H1 (cell line): ENCODE measurements at regions of chr11 and their contacts with region 1.

Region 1: GRCh38 chr11:134819041-134819440 is 407.0 kb upstream of the B3GAT1 start:
- DNase-seq: no peak
- H3K4me3 ChIP-seq: no peak overlapping the region
- H3K27ac ChIP-seq: no peak overlapping the region
- H3K4me1 ChIP-seq: peaks cover 0 to 3% (median under 1%) of the 10 kb centered on the region in 4 experiments; a peak in 1 of 7 replicates
- H3K27me3 ChIP-seq: 0 out of 7 replicates have a peak, but pooled peaks cover 0 to 3% (median 0%) of the 10 kb centered on the region in 4 experiments
- CTCF ChIP-seq: peak; percentile 66 to 83 (median 69)
- EP300 ChIP-seq: no peak
- POLR2A ChIP-seq: no peak
- RAD21 ChIP-seq: peak; percentile 60 to 73

Region 2: DNA sequence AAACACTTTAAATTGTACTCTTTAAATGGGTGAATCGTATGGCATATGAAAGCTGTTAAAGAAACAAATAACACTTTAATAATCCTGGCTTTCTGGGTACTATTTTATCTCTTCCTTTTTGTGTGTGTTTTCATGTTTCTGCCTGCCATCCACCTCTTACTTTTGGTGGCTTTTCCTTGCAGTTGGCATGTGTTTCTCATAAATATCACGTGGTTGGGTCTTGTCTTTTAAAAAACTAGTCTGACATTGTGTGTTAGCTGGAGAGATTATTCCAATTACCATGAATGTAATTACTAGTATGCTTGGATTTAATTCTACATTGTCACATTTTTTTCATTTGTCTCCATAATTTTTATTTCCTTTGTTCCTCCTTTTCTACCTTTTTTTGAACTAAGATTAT is 144.1 kb before region 1 on chr11:
- CTCF ChIA-PET with region 1: no interaction called
- POLR2A ChIA-PET with region 1: no interaction called
- DNase-seq: no peak
- H3K4me3 ChIP-seq: no peak overlapping the region
- H3K27ac ChIP-seq: no peak overlapping the region
- H3K4me1 ChIP-seq: peaks cover 0 to 3% (median 0%) of the 10 kb centered on the region in 4 experiments; a peak in 1 of 7 replicates
- H3K27me3 ChIP-seq: no peaks in the 10 kb centered on the region; a peak in 3 of 7 replicates
- CTCF ChIP-seq: no peak
- EP300 ChIP-seq: no peak
- POLR2A ChIP-seq: no peak
- RAD21 ChIP-seq: no peak

Region 3: GRCh38 chr11:134797411-134798089 is 21.5 kb before region 1 on chr11:
- CTCF ChIA-PET with region 1: interaction called, 10 read pairs
- POLR2A ChIA-PET with region 1: no interaction called
- DNase-seq: no peak
- H3K4me3 ChIP-seq: no peak overlapping the region
- H3K27ac ChIP-seq: no peak overlapping the region
- H3K4me1 ChIP-seq: peaks cover 3 to 19% (median 11%) of the 10 kb centered on the region in 4 experiments
- H3K27me3 ChIP-seq: no peaks in the 10 kb centered on the region; a peak in 2 of 7 replicates
- CTCF ChIP-seq: no peak
- EP300 ChIP-seq: no peak
- POLR2A ChIP-seq: no peak
- RAD21 ChIP-seq: peak in 1 of 2 experiments; percentile 26; a peak in 1 of 4 replicates

Region 4: GRCh38 chr11:134807997-134808396 is 11.0 kb before region 1 on chr11:
- CTCF ChIA-PET with region 1: interaction called, 18 read pairs
- POLR2A ChIA-PET with region 1: interaction called, 3 read pairs
- DNase-seq: no peak
- H3K4me3 ChIP-seq: no peak overlapping the region
- H3K27ac ChIP-seq: no peak overlapping the region
- H3K4me1 ChIP-seq: no peaks in the 10 kb centered on the region
- H3K27me3 ChIP-seq: no peaks in the 10 kb centered on the region
- CTCF ChIP-seq: no peak
- EP300 ChIP-seq: no peak
- POLR2A ChIP-seq: no peak
- RAD21 ChIP-seq: no peak

Region 5: DNA sequence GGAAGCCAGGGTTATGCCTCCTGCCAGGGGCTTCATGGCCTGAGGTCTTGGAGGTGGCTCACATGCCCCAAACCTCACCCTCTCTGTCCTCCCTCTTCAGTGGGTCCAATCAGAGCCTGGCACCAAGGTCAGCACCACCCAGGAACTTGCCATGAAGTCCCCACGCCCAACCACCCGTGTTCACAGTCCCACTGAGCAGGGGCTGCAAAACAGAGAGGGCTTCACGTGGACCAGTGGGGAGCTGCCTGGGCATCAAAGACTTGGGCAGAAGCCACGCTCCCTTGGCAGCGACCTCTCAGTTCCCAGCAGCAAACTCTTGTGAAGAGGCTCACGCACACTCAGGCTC is 18.8 kb after region 1 on chr11:
- CTCF ChIA-PET with region 1: interaction called, 11 read pairs
- POLR2A ChIA-PET with region 1: no interaction called
- DNase-seq: peak in 1 of 2 experiments; percentile 42
- H3K4me3 ChIP-seq: no peak overlapping the region
- H3K27ac ChIP-seq: no peak overlapping the region
- H3K4me1 ChIP-seq: no peaks in the 10 kb centered on the region
- H3K27me3 ChIP-seq: no peaks in the 10 kb centered on the region
- CTCF ChIP-seq: no peak
- EP300 ChIP-seq: no peak
- POLR2A ChIP-seq: no peak
- RAD21 ChIP-seq: no peak